Mammary epithelial cell (primary cell): ENCODE measurements at regions of chr1 and their contacts with region 1.

Region 1: GRCh38 chr1:45750298-45751038 is at the start of gene IPP:
- DNase-seq: peak; percentile 98
- H3K4me3 ChIP-seq: peak within 1 kb of the TSS; percentile 57 to 68 (median 63)
- H3K27ac ChIP-seq: peak within 1 kb of the TSS; percentile 84
- H3K4me1 ChIP-seq: no peaks in the 10 kb centered on the region
- H3K27me3 ChIP-seq: no peaks in the 10 kb centered on the region
- CTCF ChIP-seq: peak in 1 of 2 donors; percentile 50
- total RNA-seq, gene IPP: 14.0 to 14.5 TPM

Region 2: GRCh38 chr1:45512641-45513054 is 237.8 kb before region 1 on chr1:
- CTCF ChIA-PET with region 1: no interaction called
- dilution Hi-C with region 1: no loop called
- in situ Hi-C with region 1: no loop called
- intact Hi-C with region 1: no loop called
- DNase-seq: peak; percentile 48
- H3K4me3 ChIP-seq: no peak overlapping the region
- H3K27ac ChIP-seq: no peak overlapping the region
- H3K4me1 ChIP-seq: no peaks in the 10 kb centered on the region
- H3K27me3 ChIP-seq: no peaks in the 10 kb centered on the region
- CTCF ChIP-seq: peak; percentile 68 to 84

Region 3: DNA sequence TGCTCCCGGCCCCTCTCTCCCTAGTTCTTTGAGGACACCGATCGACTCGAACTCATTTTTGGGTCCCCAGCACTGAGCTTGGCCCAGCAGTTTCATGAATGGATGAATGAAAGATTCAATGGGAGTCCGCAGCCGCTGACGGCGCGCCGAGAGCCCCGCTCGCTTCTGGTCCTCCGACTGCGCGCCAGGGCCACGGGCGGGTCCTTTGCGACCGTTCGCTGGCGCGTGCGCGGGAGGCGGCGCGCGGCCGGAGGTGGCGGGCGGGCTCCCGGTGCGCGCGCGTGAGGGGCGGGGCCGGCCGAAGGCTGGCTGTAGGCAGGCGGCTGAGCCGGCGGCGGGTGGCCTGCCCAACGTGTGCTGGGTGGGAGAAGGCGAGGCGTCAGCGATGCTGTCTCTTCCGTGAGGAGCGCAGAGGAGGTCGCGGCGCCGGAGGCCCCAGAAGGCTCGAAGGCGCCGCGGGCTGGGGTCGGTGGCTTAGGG is 52.9 kb after region 1 on chr1 and contains the start of gene MAST2:
- CTCF ChIA-PET with region 1: no interaction called
- dilution Hi-C with region 1: no loop called
- in situ Hi-C with region 1: no loop called
- intact Hi-C with region 1: loop called (anchors 2 kb)
- DNase-seq: peak; percentile 85
- H3K4me3 ChIP-seq: peak within 1 kb of the TSS; percentile 57 to 71 (median 70)
- H3K27ac ChIP-seq: peak within 1 kb of the TSS; percentile 88
- H3K4me1 ChIP-seq: peaks cover 16% of the 10 kb centered on the region
- H3K27me3 ChIP-seq: no peaks in the 10 kb centered on the region
- CTCF ChIP-seq: no peak
- total RNA-seq, gene MAST2: 32.8 to 40.3 TPM

Region 4: GRCh38 chr1:46003315-46003714 is 252.8 kb after region 1 on chr1:
- CTCF ChIA-PET with region 1: no interaction called
- dilution Hi-C with region 1: no loop called
- in situ Hi-C with region 1: no loop called
- intact Hi-C with region 1: loop called (anchors 10 kb)
- DNase-seq: no peak
- H3K4me3 ChIP-seq: no peak overlapping the region
- H3K27ac ChIP-seq: no peak overlapping the region
- H3K4me1 ChIP-seq: no peaks in the 10 kb centered on the region
- H3K27me3 ChIP-seq: no peaks in the 10 kb centered on the region
- CTCF ChIP-seq: no peak